Naive thymus-derived CD4-positive, alpha-beta T cell (primary cell): ENCODE measurements at regions of chr10 and their contacts with region 1.

Region 1: GRCh38 chr10:112183329-112184051 is at the start of gene GPAM:
- DNase-seq: peak; percentile 93 to 100 (median 97)
- ATAC-seq: peak; percentile 100
- H3K4me3 ChIP-seq: peak within 1 kb of the TSS; percentile 88
- H3K4me3 Mint-ChIP-seq: peak within 1 kb of the TSS; percentile 87 to 98 (median 92)
- H3K27ac ChIP-seq: peak within 1 kb of the TSS; percentile 75
- H3K27ac Mint-ChIP-seq: peak within 1 kb of the TSS; percentile 84 to 99 (median 94)
- H3K4me1 ChIP-seq: peaks cover 7 to 8% of the 10 kb centered on the region in 2 donors
- H3K4me1 Mint-ChIP-seq: peaks cover 13 to 34% (median 27%) of the 10 kb centered on the region in 7 donors
- H3K27me3 ChIP-seq: no peaks in the 10 kb centered on the region
- H3K27me3 Mint-ChIP-seq: peaks cover 0 to 11% (median 0%) of the 10 kb centered on the region in 5 donors
- total RNA-seq, gene GPAM: 3.7 to 11.3 (median 6.6) TPM

Region 2: GRCh38 chr10:111560027-111560426 is 623.5 kb before region 1 on chr10:
- CTCF ChIA-PET with region 1: no interaction called
- POLR2A ChIA-PET with region 1: no interaction called
- intact Hi-C with region 1: no loop called
- DNase-seq: no peak
- ATAC-seq: no peak
- H3K4me3 ChIP-seq: no peak overlapping the region
- H3K4me3 Mint-ChIP-seq: no peak overlapping the region
- H3K27ac ChIP-seq: no peak overlapping the region
- H3K27ac Mint-ChIP-seq: no peak overlapping the region
- H3K4me1 ChIP-seq: no peaks in the 10 kb centered on the region
- H3K4me1 Mint-ChIP-seq: peaks cover 0 to 1% (median 0%) of the 10 kb centered on the region in 7 donors
- H3K27me3 ChIP-seq: peaks cover 0 to 3% of the 10 kb centered on the region in 2 donors
- H3K27me3 Mint-ChIP-seq: peaks cover 0 to 30% (median 6%) of the 10 kb centered on the region in 5 donors

Region 3: GRCh38 chr10:112446855-112447711 is 263.6 kb after region 1 on chr10 and contains the starts of genes VTI1A and ZDHHC6:
- CTCF ChIA-PET with region 1: no interaction called
- POLR2A ChIA-PET with region 1: interaction called, 13 read pairs
- intact Hi-C with region 1: loop called (anchors 1 kb)
- DNase-seq: peak; percentile 70 to 89 (median 84)
- ATAC-seq: peak; percentile 95
- H3K4me3 ChIP-seq: peak within 1 kb of the TSS; percentile 85
- H3K4me3 Mint-ChIP-seq: peak within 1 kb of the TSS; percentile 92 to 100 (median 96)
- H3K27ac ChIP-seq: peak within 1 kb of the TSS; percentile 90
- H3K27ac Mint-ChIP-seq: peak within 1 kb of the TSS; percentile 95 to 100 (median 99)
- H3K4me1 ChIP-seq: peaks cover 23 to 25% of the 10 kb centered on the region in 2 donors
- H3K4me1 Mint-ChIP-seq: peaks cover 31 to 81% (median 65%) of the 10 kb centered on the region in 7 donors
- H3K27me3 ChIP-seq: no peaks in the 10 kb centered on the region
- H3K27me3 Mint-ChIP-seq: no peaks in the 10 kb centered on the region
- total RNA-seq, gene VTI1A: 40.2 to 56.8 (median 51.4) TPM
- total RNA-seq, gene ZDHHC6: 34.3 to 66.3 (median 50.9) TPM